MCF 10A (cell line): ENCODE measurements at regions of chr3 and their contacts with region 1.

Region 1: GRCh38 chr3:188947401-188948280 is 224.1 kb upstream of the TPRG1 start:
- DNase-seq: peak; percentile 99
- H3K4me3 Mint-ChIP-seq: peak overlapping the region; percentile 71
- H3K27ac Mint-ChIP-seq: peak overlapping the region; percentile 96
- H3K4me1 Mint-ChIP-seq: peaks cover 58% of the 10 kb centered on the region
- H3K27me3 Mint-ChIP-seq: no peaks in the 10 kb centered on the region
- CTCF ChIP-seq: peak; percentile 46

Region 2: GRCh38 chr3:188286087-188286513 is 661.5 kb before region 1 on chr3:
- CTCF ChIA-PET with region 1: no interaction called
- POLR2A ChIA-PET with region 1: no interaction called
- intact Hi-C with region 1: loop called (anchors 5 kb)
- DNase-seq: peak; percentile 95
- H3K4me3 Mint-ChIP-seq: no peak overlapping the region
- H3K27ac Mint-ChIP-seq: peak overlapping the region; percentile 86
- H3K4me1 Mint-ChIP-seq: peaks cover 24% of the 10 kb centered on the region
- H3K27me3 Mint-ChIP-seq: no peaks in the 10 kb centered on the region
- CTCF ChIP-seq: no peak

Region 3: DNA sequence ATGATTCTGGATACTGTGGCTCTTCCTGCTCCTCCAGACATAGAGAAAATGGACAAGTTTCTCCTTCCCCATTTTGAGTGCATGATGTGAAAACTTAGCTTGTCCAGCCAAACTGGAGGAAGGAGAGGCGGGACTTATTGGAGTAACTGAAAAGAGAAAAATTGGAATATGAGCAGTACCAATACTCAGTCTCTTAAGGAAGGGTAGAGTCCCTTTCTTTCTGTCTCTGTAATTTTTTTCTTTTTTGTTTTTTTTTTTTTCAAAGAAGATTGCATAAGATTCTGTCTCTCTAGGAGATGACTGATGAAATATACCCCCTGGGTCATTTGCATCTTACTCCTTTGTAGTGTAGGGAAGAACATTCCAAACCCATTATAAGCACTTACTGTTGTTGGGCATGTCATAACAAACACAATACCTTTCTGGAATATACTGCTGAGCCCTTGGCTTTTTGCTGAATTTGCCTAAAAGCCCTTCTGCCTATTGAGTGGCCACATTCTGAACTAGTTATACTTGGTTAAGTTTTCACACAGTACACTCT is 273.9 kb before region 1 on chr3:
- CTCF ChIA-PET with region 1: interaction called, 10 read pairs
- POLR2A ChIA-PET with region 1: interaction called, 18 read pairs
- intact Hi-C with region 1: no loop called
- DNase-seq: peak; percentile 95
- H3K4me3 Mint-ChIP-seq: peak overlapping the region; percentile 43
- H3K27ac Mint-ChIP-seq: peak overlapping the region; percentile 89
- H3K4me1 Mint-ChIP-seq: peaks cover 38% of the 10 kb centered on the region
- H3K27me3 Mint-ChIP-seq: no peaks in the 10 kb centered on the region
- CTCF ChIP-seq: no peak

Region 4: DNA sequence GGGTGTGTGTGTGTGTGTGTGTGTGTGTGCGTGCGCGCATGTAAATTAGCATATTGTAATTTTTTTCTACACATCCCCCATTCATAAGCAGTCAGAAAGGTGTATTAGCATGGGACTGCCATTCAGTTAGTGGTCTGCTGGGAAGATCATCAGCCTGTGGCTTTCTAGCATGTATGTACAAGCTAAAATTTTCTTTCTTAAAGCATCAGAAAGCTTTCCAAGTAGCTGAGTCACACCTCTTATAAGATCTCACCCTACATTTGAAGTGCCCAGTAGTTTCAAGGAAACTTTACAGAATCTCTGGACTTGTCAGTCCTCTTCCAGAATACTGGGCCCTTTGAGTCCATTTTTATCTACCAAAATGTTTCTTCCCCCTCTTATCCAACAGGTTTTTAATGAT is 187.2 kb before region 1 on chr3:
- CTCF ChIA-PET with region 1: no interaction called
- POLR2A ChIA-PET with region 1: no interaction called
- intact Hi-C with region 1: no loop called
- DNase-seq: peak; percentile 47
- H3K4me3 Mint-ChIP-seq: no peak overlapping the region
- H3K27ac Mint-ChIP-seq: no peak overlapping the region
- H3K4me1 Mint-ChIP-seq: peaks cover 4% of the 10 kb centered on the region
- H3K27me3 Mint-ChIP-seq: no peaks in the 10 kb centered on the region
- CTCF ChIP-seq: no peak

Region 5: DNA sequence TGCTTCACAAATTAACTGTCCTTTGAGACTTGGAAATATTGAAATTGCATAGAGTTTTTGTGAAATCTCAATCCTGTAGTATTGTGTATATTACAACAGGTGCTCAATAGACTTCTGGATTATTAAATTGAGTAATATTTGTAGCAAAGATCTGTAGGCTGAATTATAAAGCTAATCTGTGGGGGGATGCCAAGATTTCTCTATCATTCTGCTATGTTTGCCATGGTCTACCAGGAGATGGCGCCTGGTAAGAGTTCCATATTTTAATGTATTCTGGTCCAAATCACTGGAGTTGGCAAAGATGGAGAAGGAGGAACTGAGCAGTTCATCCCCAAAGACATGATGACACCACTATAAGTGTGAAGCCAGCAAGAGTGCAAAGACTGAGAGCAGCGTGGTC is 116.7 kb before region 1 on chr3:
- CTCF ChIA-PET with region 1: interaction called, 19 read pairs
- POLR2A ChIA-PET with region 1: interaction called, 52 read pairs
- intact Hi-C with region 1: no loop called
- DNase-seq: peak; percentile 45
- H3K4me3 Mint-ChIP-seq: no peak overlapping the region
- H3K27ac Mint-ChIP-seq: no peak overlapping the region
- H3K4me1 Mint-ChIP-seq: peaks cover 21% of the 10 kb centered on the region
- H3K27me3 Mint-ChIP-seq: no peaks in the 10 kb centered on the region
- CTCF ChIP-seq: no peak

Region 6: DNA sequence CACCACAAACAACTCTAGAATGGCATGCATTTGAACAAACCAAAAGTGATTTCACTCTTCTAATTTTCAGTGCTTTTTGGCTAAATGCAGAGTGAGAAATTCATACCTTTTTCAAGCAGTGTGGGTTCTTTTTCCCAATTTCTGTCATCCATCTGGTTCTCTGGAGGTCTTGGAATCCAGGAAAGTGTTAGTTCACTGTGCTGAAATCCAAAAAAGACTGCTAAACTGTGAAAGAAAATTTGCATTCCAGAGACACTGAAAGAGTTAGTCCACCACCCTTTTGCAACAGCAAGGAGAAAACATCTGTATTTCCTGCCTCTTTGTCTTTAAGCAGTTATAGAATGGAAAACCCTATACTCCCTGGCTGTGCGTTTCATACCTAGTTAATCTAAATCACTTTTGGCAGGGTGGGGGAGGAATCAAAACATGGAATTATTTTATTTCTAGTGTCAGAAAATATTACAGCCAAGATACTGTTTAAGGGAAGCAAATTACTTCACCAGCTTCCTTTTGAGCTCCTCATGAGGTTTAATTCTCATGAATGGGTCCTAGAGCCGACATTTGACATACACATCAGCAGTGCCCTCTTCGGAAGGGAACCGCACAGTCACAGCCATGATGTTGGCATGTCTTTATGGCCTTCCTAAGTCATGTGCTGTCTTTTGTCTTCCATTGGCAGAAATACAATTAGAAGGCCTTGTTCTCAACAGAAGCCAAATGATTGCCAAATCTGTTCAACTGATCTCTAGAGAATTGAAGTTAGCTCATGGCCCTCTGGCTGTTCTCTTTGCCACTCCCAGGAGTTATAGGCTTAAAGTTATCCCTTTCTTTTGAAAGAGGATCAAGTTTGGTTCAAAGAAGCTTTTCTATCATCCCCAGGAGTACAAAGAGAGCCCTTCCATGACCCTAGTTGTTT is 93.5 kb before region 1 on chr3:
- CTCF ChIA-PET with region 1: interaction called, 9 read pairs
- POLR2A ChIA-PET with region 1: interaction called, 37 read pairs
- intact Hi-C with region 1: no loop called
- DNase-seq: peak; percentile 73
- H3K4me3 Mint-ChIP-seq: peak overlapping the region; percentile 50
- H3K27ac Mint-ChIP-seq: peak overlapping the region; percentile 87
- H3K4me1 Mint-ChIP-seq: peaks cover 26% of the 10 kb centered on the region
- H3K27me3 Mint-ChIP-seq: no peaks in the 10 kb centered on the region
- CTCF ChIP-seq: no peak

Region 7: DNA sequence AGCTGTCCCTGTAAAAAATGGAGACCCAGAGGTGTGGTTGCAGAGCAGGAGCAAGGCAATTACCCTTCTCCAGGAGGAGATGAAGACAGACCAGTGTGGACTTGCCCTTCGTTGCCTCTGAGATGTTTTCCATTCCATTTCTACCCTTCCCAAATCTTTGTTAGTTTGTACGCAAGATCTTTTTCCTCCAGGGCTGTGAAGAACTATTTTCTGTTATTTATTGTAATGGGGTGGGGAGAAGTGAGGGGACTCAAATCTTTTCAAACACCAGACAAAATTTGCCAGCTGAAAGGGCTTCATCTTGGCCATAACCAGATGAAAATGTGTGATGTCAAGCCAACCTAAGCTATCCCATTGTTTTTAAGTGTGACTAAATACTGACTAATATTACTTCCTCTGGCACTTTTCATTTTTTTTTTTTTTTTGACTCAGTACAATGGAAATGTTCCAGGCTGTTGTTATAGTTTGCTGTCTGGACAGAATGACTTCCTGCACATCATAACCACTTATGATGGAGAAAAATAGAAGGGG is 47.2 kb before region 1 on chr3:
- CTCF ChIA-PET with region 1: interaction called, 3 read pairs
- POLR2A ChIA-PET with region 1: interaction called, 26 read pairs
- intact Hi-C with region 1: loop called (anchors 1 kb)
- DNase-seq: peak; percentile 87
- H3K4me3 Mint-ChIP-seq: peak overlapping the region; percentile 12
- H3K27ac Mint-ChIP-seq: peak overlapping the region; percentile 80
- H3K4me1 Mint-ChIP-seq: peaks cover 52% of the 10 kb centered on the region
- H3K27me3 Mint-ChIP-seq: no peaks in the 10 kb centered on the region
- CTCF ChIP-seq: no peak